Calu3 (cell line): ENCODE measurements at regions of chr1 and their contacts with region 1.

Region 1: GRCh38 chr1:80534606-80535360 is 1266.0 kb upstream of the ADGRL2 start:
- DNase-seq: peak; percentile 33
- H3K4me3 Mint-ChIP-seq: peak overlapping the region; percentile 89
- H3K27ac Mint-ChIP-seq: peak overlapping the region; percentile 96
- H3K4me1 Mint-ChIP-seq: peaks cover 42% of the 10 kb centered on the region
- H3K27me3 Mint-ChIP-seq: no peaks in the 10 kb centered on the region
- CTCF ChIP-seq: no peak

Region 2: GRCh38 chr1:80436851-80437250 is 97.9 kb before region 1 on chr1:
- CTCF ChIA-PET with region 1: no interaction called
- intact Hi-C with region 1: no loop called
- DNase-seq: no peak
- H3K4me3 Mint-ChIP-seq: no peak overlapping the region
- H3K27ac Mint-ChIP-seq: no peak overlapping the region
- H3K4me1 Mint-ChIP-seq: no peaks in the 10 kb centered on the region
- H3K27me3 Mint-ChIP-seq: no peaks in the 10 kb centered on the region
- CTCF ChIP-seq: no peak

Region 3: GRCh38 chr1:80594013-80594730 is 59.4 kb after region 1 on chr1:
- CTCF ChIA-PET with region 1: no interaction called
- intact Hi-C with region 1: loop called (anchors 2 kb)
- DNase-seq: peak; percentile 69
- H3K4me3 Mint-ChIP-seq: peak overlapping the region; percentile 48
- H3K27ac Mint-ChIP-seq: peak overlapping the region; percentile 92
- H3K4me1 Mint-ChIP-seq: peaks cover 33% of the 10 kb centered on the region
- H3K27me3 Mint-ChIP-seq: no peaks in the 10 kb centered on the region
- CTCF ChIP-seq: no peak

Region 4: GRCh38 chr1:81808760-81809159 is 1274.0 kb after region 1 on chr1:
- CTCF ChIA-PET with region 1: no interaction called
- intact Hi-C with region 1: loop called (anchors 5 kb)
- DNase-seq: peak; percentile 11
- H3K4me3 Mint-ChIP-seq: peak overlapping the region; percentile 57
- H3K27ac Mint-ChIP-seq: peak overlapping the region; percentile 75
- H3K4me1 Mint-ChIP-seq: peaks cover 33% of the 10 kb centered on the region
- H3K27me3 Mint-ChIP-seq: no peaks in the 10 kb centered on the region
- CTCF ChIP-seq: no peak